Esophagus muscularis mucosa (tissue), 4 donors: ENCODE measurements at regions of chr17 and their contacts with region 1.

Region 1: GRCh38 chr17:3935140-3935542 is 18.9 kb upstream of the P2RX1 start:
- DNase-seq: no peak
- H3K4me3 ChIP-seq: no peak overlapping the region
- H3K27ac ChIP-seq: no peak overlapping the region
- H3K4me1 ChIP-seq: no peaks in the 10 kb centered on the region
- H3K27me3 ChIP-seq: no peaks in the 10 kb centered on the region
- CTCF ChIP-seq: peak; percentile 57 to 71 (median 69)
- EP300 ChIP-seq: no peak
- POLR2A ChIP-seq: no peak

Region 2: GRCh38 chr17:3788200-3788599 is 146.9 kb before region 1 on chr17:
- intact Hi-C with region 1: no loop called
- DNase-seq: no peak
- H3K4me3 ChIP-seq: no peak overlapping the region
- H3K27ac ChIP-seq: no peak overlapping the region
- H3K4me1 ChIP-seq: peaks cover 0 to 7% (median 3%) of the 10 kb centered on the region in 4 donors
- H3K27me3 ChIP-seq: no peaks in the 10 kb centered on the region
- CTCF ChIP-seq: no peak
- EP300 ChIP-seq: no peak
- POLR2A ChIP-seq: no peak

Region 3: DNA sequence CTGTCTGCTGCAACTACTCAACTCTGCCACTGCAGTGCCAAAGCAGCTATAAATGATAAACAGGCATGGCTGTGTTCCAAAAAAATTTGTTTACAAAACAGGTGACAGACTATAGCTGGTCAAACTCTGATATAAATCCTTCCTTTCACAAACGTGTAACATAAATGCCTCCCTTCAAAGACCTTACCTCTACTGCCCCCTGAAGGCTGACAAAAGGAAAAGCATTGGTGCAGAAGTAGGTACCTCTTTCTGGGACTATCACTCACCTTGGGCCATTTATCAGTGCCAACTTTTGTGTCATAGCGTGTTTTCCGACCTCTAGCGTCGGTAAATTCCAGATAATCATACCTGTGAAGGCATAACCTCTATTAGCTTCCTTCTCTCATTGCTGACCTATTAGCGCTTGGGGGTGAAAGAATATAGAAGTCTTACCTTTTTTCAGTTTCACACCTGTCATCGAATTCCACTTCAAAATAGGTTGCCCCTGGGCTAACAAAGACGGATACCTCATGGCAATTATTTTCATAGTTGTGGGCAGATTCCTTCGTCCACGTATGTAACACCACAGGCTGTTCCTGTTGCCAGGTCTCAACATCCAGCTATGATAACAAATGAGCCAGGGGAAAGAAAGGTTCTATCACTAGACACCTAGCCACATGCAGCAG is 139.8 kb after region 1 on chr17:
- intact Hi-C with region 1: loop called (anchors 10 kb)
- DNase-seq: no peak
- H3K4me3 ChIP-seq: no peak overlapping the region
- H3K27ac ChIP-seq: peak overlapping the region; percentile 36 to 73 (median 61)
- H3K4me1 ChIP-seq: peaks cover 8 to 32% (median 21%) of the 10 kb centered on the region in 4 donors
- H3K27me3 ChIP-seq: no peaks in the 10 kb centered on the region
- CTCF ChIP-seq: peak; percentile 49 to 67 (median 64)
- EP300 ChIP-seq: no peak
- POLR2A ChIP-seq: no peak